AG04449 (cell line): ENCODE measurements at regions of chr7 and their contacts with region 1.

Region 1: DNA sequence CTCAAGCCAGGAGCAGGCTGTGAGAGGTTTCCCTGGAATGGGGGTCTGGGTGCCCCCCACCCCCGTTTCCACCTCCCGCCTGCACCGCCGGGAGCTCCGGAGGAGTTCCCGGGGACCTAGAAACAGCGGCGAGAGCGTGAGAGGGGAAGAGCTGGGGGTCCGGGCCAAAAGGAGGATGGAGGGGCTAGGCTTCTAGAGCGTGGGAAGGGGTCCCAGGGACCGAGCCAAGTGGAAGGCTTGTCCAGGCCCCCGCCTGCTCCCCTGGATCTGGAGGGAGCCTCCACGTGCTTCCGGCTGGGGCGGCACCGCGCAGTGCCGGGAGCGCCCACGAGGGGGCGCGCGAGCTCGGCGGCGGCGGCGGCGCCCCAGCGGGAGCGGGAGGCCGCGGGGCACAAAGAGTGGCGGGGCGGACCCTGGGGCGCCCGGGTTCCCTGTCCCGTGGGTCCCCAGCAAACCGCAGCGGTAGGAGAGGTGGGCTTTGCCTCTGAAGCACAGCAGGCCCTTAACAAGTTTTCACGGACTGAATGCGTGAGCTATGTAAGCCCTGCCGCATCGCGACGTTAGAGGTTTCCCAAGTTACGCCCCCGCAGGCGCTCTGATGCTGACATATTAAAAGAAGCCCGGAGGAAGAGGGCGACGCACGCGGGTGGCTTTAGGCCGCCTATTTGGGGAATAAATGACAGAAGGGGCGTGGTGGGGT is 104.4 kb upstream of the LRRC4 start:
- DNase-seq: no peak
- H3K4me3 ChIP-seq: peak overlapping the region; percentile 65
- CTCF ChIP-seq: peak; percentile 68

Region 2: GRCh38 chr7:127792528-127793342 is 342.9 kb before region 1 on chr7:
- CTCF ChIA-PET with region 1: no interaction called
- POLR2A ChIA-PET with region 1: no interaction called
- DNase-seq: no peak
- H3K4me3 ChIP-seq: no peak overlapping the region
- CTCF ChIP-seq: peak; percentile 37

Region 3: GRCh38 chr7:127997226-127997922 is 138.3 kb before region 1 on chr7:
- CTCF ChIA-PET with region 1: no interaction called
- POLR2A ChIA-PET with region 1: no interaction called
- DNase-seq: no peak
- H3K4me3 ChIP-seq: no peak overlapping the region
- CTCF ChIP-seq: no peak

Region 4: GRCh38 chr7:128104035-128104742 is 31.5 kb before region 1 on chr7:
- CTCF ChIA-PET with region 1: interaction called, 12 read pairs
- POLR2A ChIA-PET with region 1: no interaction called
- DNase-seq: no peak
- H3K4me3 ChIP-seq: peak overlapping the region; percentile 49
- CTCF ChIP-seq: no peak

Region 5: GRCh38 chr7:128115391-128116332 is 20.0 kb before region 1 on chr7:
- CTCF ChIA-PET with region 1: interaction called, 14 read pairs
- POLR2A ChIA-PET with region 1: interaction called, 3 read pairs
- DNase-seq: no peak
- H3K4me3 ChIP-seq: no peak overlapping the region
- CTCF ChIP-seq: no peak

Region 6: DNA sequence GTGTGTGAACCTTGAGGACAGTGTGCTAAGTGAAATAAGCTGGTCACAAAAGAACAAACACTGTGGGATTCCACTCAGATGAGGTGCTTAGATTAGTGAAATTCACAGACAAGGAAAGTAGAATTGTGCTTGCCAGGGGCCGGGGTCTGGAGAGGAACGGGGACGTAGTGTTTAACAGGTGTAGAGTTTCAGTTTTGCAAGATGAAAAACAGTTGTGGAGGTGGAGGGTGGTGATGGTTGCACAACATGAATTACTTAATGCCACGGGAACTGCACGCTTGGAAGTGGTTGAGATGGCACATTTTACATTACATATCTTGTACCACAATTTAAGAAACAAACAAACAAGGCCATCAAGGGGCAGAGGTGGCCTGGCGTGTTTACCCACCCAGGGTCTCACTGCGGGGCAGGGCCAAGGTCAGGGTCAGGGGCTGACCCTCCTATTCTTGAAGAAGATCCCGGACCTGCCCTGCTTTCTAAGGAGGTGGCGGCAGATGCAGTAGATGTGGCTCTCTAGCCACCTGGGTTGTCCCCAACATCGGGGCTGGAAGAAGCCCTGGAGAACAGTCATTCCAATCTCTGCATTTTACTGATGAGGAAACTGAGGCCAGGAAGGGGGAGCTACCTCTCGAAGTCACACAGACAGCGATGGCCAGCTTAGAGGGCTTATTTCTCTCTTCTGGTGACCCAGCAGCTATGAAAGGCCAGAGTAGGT is 12.9 kb before region 1 on chr7:
- CTCF ChIA-PET with region 1: interaction called, 23 read pairs
- POLR2A ChIA-PET with region 1: no interaction called
- DNase-seq: no peak
- H3K4me3 ChIP-seq: no peak overlapping the region
- CTCF ChIP-seq: no peak

Region 7: DNA sequence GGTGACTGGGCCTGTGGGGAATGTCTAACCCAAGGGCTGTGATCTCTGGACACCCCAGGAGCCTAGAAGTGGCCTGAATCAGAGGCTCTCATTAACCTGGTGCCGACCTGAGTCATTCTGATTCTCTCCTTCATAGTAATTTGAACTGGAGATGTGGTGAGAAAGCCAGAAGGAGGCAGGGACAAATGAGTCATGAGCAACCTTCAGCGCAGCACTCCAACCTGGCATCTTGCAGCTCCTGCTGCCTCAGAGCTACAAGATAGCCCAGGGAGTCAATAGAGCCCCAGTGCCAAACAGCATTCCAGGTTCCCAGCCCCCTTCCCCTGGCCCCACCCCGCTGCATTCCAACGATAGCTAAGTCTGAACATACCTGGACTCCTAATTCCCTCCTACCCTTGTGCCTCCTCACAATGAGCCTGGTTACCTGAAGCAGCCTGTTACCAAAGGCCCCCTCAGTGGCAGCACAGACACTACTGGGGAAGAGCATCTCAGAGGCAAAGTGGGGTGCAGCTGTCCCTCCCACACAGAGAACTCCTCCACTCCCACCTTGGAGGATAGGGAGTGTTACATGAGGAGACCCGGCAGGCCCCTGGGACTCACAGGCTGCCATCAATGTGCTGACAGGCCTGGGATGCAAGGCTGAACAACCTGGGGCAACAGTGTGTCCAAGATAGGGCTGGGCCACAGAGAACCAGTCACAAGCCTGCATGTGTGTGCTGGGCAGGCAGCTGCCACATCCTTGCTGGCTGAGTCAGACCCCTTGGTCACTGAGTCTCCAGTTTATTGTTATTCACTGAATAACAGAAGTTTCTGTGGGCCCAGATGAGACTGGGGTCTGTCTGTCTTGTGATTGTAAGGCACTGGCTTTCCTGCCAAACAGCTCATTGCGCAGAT is 28.6 kb after region 1 on chr7:
- CTCF ChIA-PET with region 1: interaction called, 14 read pairs
- POLR2A ChIA-PET with region 1: no interaction called
- DNase-seq: peak; percentile 2
- H3K4me3 ChIP-seq: no peak overlapping the region
- CTCF ChIP-seq: no peak

Region 8: GRCh38 chr7:128201051-128201689 is 65.5 kb after region 1 on chr7:
- CTCF ChIA-PET with region 1: no interaction called
- POLR2A ChIA-PET with region 1: no interaction called
- DNase-seq: no peak
- H3K4me3 ChIP-seq: no peak overlapping the region
- CTCF ChIP-seq: no peak